Activated CD4-positive, alpha-beta memory T cell treated with anti-CD3 and anti-CD28 coated beads for 36 hours (primary cell): ENCODE measurements at regions of chr1 and their contacts with region 1.

Region 1: GRCh38 chr1:180178511-180179161 is 24.0 kb downstream of the QSOX1 start:
- DNase-seq: peak; percentile 74
- H3K4me3 Mint-ChIP-seq: no peak overlapping the region
- H3K27ac Mint-ChIP-seq: no peak overlapping the region
- H3K4me1 Mint-ChIP-seq: no peaks in the 10 kb centered on the region
- H3K27me3 Mint-ChIP-seq: no peaks in the 10 kb centered on the region

Region 2: DNA sequence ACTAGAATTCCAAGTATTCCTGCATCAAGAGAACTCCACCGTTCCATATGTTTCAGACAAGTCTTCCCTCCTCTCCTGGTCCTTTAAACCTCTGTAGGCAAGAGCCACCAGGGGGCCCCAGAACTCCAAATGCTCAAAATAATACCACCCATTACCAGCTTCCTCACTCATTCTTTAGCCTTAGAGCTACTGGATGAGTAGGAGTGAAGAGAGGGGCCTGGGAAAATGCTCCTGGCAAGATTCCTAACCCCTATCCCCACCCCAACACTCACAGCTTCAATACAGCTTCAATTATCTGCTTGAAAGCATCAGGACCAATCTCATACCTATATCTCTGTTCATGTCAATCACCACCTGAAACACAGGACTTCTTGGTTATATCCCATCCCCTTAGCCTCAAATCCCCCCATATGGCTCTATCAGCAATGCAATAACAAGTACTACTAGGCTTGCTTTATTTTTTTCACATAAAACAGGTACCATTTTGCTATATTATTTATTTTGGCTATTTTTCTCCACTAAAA is 310.8 kb before region 1 on chr1:
- CTCF ChIA-PET with region 1: interaction called, 27 read pairs
- POLR2A ChIA-PET with region 1: no interaction called
- intact Hi-C with region 1: loop called (anchors 1 kb)
- DNase-seq: peak; percentile 63
- H3K4me3 Mint-ChIP-seq: no peak overlapping the region
- H3K27ac Mint-ChIP-seq: no peak overlapping the region
- H3K4me1 Mint-ChIP-seq: peaks cover 18% of the 10 kb centered on the region
- H3K27me3 Mint-ChIP-seq: no peaks in the 10 kb centered on the region

Region 3: GRCh38 chr1:180092931-180093559 is 85.6 kb before region 1 on chr1:
- CTCF ChIA-PET with region 1: interaction called, 19 read pairs
- POLR2A ChIA-PET with region 1: no interaction called
- intact Hi-C with region 1: no loop called
- DNase-seq: no peak
- H3K4me3 Mint-ChIP-seq: no peak overlapping the region
- H3K27ac Mint-ChIP-seq: no peak overlapping the region
- H3K4me1 Mint-ChIP-seq: peaks cover 3% of the 10 kb centered on the region
- H3K27me3 Mint-ChIP-seq: no peaks in the 10 kb centered on the region

Region 4: DNA sequence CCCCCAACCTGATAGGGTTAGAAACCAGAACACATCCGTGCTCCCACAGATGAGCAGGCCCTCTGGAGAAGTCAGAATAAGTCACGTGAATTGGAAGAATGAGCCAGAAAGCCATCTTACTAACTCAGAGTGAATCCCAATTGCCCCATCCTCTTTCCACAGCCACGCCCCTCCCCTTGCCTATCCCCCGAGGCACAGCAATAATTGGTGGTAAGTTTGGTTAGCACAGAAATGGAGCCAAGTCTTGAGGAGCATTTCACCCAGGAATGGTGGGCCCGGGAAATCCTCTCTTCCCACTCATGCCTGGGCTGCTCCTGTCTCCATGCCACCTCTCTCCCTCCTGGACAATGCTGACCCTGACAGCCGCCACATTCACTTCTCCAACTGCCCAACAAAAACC is 53.2 kb before region 1 on chr1:
- CTCF ChIA-PET with region 1: interaction called, 12 read pairs
- POLR2A ChIA-PET with region 1: no interaction called
- intact Hi-C with region 1: no loop called
- DNase-seq: no peak
- H3K4me3 Mint-ChIP-seq: no peak overlapping the region
- H3K27ac Mint-ChIP-seq: no peak overlapping the region
- H3K4me1 Mint-ChIP-seq: peaks cover 10% of the 10 kb centered on the region
- H3K27me3 Mint-ChIP-seq: no peaks in the 10 kb centered on the region

Region 5: DNA sequence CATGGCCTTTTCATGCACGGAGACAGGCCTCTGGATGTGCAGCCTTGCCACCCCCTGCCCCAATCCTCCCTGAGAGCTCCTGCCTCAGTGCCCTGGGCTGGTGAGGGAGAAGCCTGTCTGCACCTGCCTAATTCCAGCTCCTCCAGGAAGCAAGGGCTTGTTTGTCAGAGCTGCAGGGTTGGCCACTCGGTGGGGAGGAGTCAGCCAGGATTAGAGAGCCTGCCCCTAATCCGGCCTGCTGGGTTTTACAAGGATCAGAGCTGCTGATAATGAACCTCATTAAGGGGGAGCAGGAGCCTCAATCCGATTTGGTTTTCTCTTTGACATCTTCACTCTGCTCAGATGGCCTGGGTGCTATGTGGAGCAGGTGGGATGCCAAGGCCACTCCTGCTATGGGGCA is 19.6 kb after region 1 on chr1:
- CTCF ChIA-PET with region 1: interaction called, 26 read pairs
- POLR2A ChIA-PET with region 1: no interaction called
- intact Hi-C with region 1: no loop called
- DNase-seq: no peak
- H3K4me3 Mint-ChIP-seq: no peak overlapping the region
- H3K27ac Mint-ChIP-seq: no peak overlapping the region
- H3K4me1 Mint-ChIP-seq: no peaks in the 10 kb centered on the region
- H3K27me3 Mint-ChIP-seq: no peaks in the 10 kb centered on the region